Naive thymus-derived CD4-positive, alpha-beta T cell (primary cell): ENCODE measurements at regions of chrX and their contacts with region 1.

Region 1: DNA sequence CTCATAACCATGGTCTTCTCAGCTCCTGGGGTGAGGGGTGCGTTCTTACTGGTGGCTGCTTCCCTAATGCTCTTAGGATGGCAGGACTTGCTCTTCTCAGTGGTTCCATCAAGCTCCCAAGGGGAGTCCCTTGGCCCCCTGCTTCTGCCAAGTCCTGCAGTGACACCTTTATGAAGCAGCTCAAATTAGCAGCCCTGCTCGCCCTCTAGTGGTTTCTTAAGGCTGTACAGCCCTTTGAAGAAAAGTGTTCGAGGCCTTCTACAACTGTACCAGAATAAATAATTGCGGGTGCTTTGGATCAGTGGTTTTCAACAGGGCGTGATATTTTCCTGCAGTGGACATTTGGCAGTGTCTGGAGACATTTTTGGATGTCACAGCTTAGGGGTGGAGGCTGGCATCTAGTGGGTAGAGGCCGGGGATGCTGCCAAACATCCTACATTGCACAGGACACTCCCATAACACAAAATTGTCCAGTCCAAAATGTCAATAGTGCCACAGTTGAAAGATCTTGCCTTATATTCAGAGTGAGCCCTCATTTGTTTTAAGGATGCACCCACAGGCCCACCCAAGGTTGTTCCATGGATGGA is 204.7 kb upstream of the S100G start:
- DNase-seq: peak; percentile 6 to 57 (median 29)
- ATAC-seq: peak; percentile 72
- H3K4me3 ChIP-seq: no peak overlapping the region
- H3K4me3 Mint-ChIP-seq: no peak overlapping the region
- H3K27ac ChIP-seq: no peak overlapping the region
- H3K27ac Mint-ChIP-seq: no peak overlapping the region
- H3K4me1 ChIP-seq: peaks cover 0 to 17% of the 10 kb centered on the region in 2 donors
- H3K4me1 Mint-ChIP-seq: peaks cover 0 to 39% (median 24%) of the 10 kb centered on the region in 7 donors
- H3K27me3 ChIP-seq: no peaks in the 10 kb centered on the region
- H3K27me3 Mint-ChIP-seq: peaks cover 0 to 3% (median 0%) of the 10 kb centered on the region in 5 donors

Region 2: DNA sequence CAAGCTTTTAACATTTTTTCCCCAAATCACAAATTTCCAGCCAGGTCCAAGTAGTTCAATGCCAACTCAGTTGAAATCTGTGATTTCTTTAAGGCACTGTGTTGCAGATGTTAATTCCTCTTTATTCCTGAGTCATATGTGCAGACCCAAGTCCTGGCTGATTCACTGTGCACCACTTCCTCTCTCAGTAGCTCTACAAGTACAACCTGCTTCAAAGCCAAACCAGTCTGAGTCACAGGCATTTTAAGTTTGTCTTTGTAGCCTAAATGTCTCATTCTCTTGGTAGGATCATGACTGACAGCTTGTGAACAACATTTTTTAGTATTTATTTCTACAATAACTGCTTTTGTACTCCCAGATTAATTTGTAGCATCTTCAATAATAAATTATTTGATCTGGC is 39.1 kb after region 1 on chrX:
- CTCF ChIA-PET with region 1: no interaction called
- POLR2A ChIA-PET with region 1: no interaction called
- intact Hi-C with region 1: loop called in 1 of 2 experiments (anchors 1 kb)
- DNase-seq: peak in 8 of 9 donors; percentile 13 to 49 (median 32)
- ATAC-seq: peak; percentile 92
- H3K4me3 ChIP-seq: no peak overlapping the region
- H3K4me3 Mint-ChIP-seq: peak overlapping the region in 1 of 10 donors; percentile 24
- H3K27ac ChIP-seq: no peak overlapping the region
- H3K27ac Mint-ChIP-seq: peak overlapping the region in 5 of 9 donors; percentile 10 to 79 (median 12)
- H3K4me1 ChIP-seq: peaks cover 0 to 5% of the 10 kb centered on the region in 2 donors
- H3K4me1 Mint-ChIP-seq: peaks cover 7 to 28% (median 12%) of the 10 kb centered on the region in 7 donors
- H3K27me3 ChIP-seq: no peaks in the 10 kb centered on the region
- H3K27me3 Mint-ChIP-seq: no peaks in the 10 kb centered on the region

Region 3: DNA sequence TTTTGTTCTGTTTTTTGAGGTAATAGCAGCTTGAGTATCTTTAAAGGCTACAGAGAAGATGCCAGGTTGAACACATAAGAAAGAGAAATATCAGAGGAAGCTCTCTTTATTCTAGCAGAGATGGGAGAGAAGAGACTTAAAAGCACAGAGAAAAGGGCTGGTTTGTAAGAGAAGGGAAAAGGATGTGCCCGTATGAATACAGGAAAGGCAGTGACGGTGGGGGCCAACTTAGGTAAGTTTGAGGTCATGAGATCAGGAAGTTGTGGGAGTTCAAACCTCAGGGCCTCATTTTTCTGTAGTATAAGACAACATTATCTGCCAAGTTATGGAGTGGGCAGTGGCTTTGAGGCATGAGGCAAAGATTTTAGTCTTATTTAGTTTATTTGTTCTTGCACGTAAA is 83.4 kb after region 1 on chrX:
- CTCF ChIA-PET with region 1: interaction called, 6 read pairs
- POLR2A ChIA-PET with region 1: no interaction called
- intact Hi-C with region 1: loop called in 1 of 2 experiments (anchors 1 kb)
- DNase-seq: peak in 8 of 9 donors; percentile 23 to 77 (median 74)
- ATAC-seq: peak; percentile 91
- H3K4me3 ChIP-seq: no peak overlapping the region
- H3K4me3 Mint-ChIP-seq: peak overlapping the region; percentile 22 to 76 (median 60)
- H3K27ac ChIP-seq: peak overlapping the region; percentile 57
- H3K27ac Mint-ChIP-seq: peak overlapping the region; percentile 85 to 96 (median 91)
- H3K4me1 ChIP-seq: peaks cover 11 to 22% of the 10 kb centered on the region in 2 donors
- H3K4me1 Mint-ChIP-seq: peaks cover 8 to 60% (median 40%) of the 10 kb centered on the region in 7 donors
- H3K27me3 ChIP-seq: no peaks in the 10 kb centered on the region
- H3K27me3 Mint-ChIP-seq: no peaks in the 10 kb centered on the region

Region 4: GRCh38 chrX:16664074-16664473 is 218.8 kb after region 1 on chrX:
- CTCF ChIA-PET with region 1: interaction called, 7 read pairs
- POLR2A ChIA-PET with region 1: no interaction called
- intact Hi-C with region 1: loop called in 1 of 2 experiments (anchors 1 kb)
- DNase-seq: peak in 4 of 9 donors; percentile 1 to 32 (median 7)
- ATAC-seq: no peak
- H3K4me3 ChIP-seq: no peak overlapping the region
- H3K4me3 Mint-ChIP-seq: no peak overlapping the region
- H3K27ac ChIP-seq: no peak overlapping the region
- H3K27ac Mint-ChIP-seq: no peak overlapping the region
- H3K4me1 ChIP-seq: no peaks in the 10 kb centered on the region
- H3K4me1 Mint-ChIP-seq: peaks cover 0 to 8% (median 0%) of the 10 kb centered on the region in 7 donors
- H3K27me3 ChIP-seq: no peaks in the 10 kb centered on the region
- H3K27me3 Mint-ChIP-seq: no peaks in the 10 kb centered on the region

Region 5: DNA sequence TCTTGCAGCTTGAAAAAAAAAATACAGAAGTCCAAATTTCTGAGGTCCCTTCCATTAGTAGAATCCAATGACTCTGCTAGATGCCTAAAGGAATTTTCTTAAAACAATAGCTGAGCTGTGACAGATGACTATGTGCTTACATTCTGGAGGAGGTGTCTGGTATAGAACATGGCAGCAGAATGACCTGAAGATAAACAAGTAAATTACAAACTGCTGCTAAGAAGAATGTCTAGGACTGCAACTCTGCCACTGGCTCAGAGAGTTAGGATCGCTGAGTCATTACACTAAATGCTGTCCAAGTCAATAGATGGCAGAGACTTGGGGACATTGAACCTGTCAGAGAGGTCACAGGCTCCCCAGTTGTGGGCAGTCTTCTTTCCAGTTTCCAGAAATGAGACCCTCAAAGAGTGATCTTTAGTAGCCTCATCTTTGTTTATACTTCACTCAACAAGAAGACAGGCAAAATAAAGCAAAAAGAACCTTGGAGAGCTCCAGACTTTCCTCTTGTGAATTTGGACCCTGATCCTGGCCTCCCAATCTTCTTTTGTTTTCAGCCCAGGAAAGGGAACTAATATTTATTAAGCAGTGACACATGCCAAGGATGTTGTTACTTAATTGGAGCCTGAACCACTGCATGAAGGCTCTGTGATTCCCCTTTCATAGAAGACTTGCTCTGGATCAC is 1235.6 kb after region 1 on chrX:
- CTCF ChIA-PET with region 1: no interaction called
- POLR2A ChIA-PET with region 1: no interaction called
- intact Hi-C with region 1: no loop called
- DNase-seq: no peak
- ATAC-seq: no peak
- H3K4me3 ChIP-seq: no peak overlapping the region
- H3K4me3 Mint-ChIP-seq: no peak overlapping the region
- H3K27ac ChIP-seq: no peak overlapping the region
- H3K27ac Mint-ChIP-seq: no peak overlapping the region
- H3K4me1 ChIP-seq: no peaks in the 10 kb centered on the region
- H3K4me1 Mint-ChIP-seq: peaks cover 0 to 22% (median 14%) of the 10 kb centered on the region in 7 donors
- H3K27me3 ChIP-seq: no peaks in the 10 kb centered on the region
- H3K27me3 Mint-ChIP-seq: no peaks in the 10 kb centered on the region